ENCODE measurements at regions of chr6 and their contacts with region 1.

Region 1: DNA sequence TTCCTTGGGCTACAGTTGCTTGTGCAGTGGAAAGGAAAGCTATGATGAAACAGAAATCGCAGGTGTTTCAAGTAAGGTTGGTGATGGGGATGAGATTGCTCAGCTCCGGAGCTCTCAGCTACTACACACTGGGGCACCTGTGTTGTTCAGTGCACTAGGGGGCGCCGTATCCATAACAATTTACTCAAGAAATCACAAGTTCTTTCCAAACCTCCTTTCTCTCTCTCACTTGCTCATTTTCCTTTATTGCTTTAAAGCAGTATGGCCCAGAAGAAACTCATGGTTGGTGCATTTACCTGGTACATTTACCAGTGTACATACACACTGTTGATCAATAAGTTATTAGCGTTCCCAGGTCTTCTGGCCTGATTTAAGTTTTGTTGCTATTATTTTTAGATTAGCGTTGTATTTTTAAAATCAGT is 235.2 kb upstream of the TAB2 start:
- DNase-seq: peak; percentile 76 to 95 (median 86)
- ATAC-seq: peak; percentile 92
- H3K4me3 ChIP-seq: no peak overlapping the region
- H3K4me3 Mint-ChIP-seq: no peak overlapping the region
- H3K27ac ChIP-seq: no peak overlapping the region
- H3K27ac Mint-ChIP-seq: no peak overlapping the region
- H3K4me1 ChIP-seq: peaks cover 15% of the 10 kb centered on the region
- H3K4me1 Mint-ChIP-seq: peaks cover 39% of the 10 kb centered on the region
- H3K27me3 ChIP-seq: no peaks in the 10 kb centered on the region
- H3K27me3 Mint-ChIP-seq: no peaks in the 10 kb centered on the region
- CTCF ChIP-seq: peak; percentile 90

Region 2: GRCh38 chr6:149147938-149148718 is 65.8 kb after region 1 on chr6:
- CTCF ChIA-PET with region 1: no interaction called
- POLR2A ChIA-PET with region 1: no interaction called
- intact Hi-C with region 1: loop called in 1 of 2 experiments (anchors 5 kb)
- DNase-seq: peak in 5 of 14 experiments; percentile 15 to 83 (median 69)
- ATAC-seq: peak; percentile 90
- H3K4me3 ChIP-seq: no peak overlapping the region
- H3K4me3 Mint-ChIP-seq: peak overlapping the region; percentile 1
- H3K27ac ChIP-seq: peak overlapping the region; percentile 53 to 68
- H3K27ac Mint-ChIP-seq: peak overlapping the region; percentile 76
- H3K4me1 ChIP-seq: peaks cover 50% of the 10 kb centered on the region
- H3K4me1 Mint-ChIP-seq: peaks cover 55% of the 10 kb centered on the region
- H3K27me3 ChIP-seq: no peaks in the 10 kb centered on the region
- H3K27me3 Mint-ChIP-seq: no peaks in the 10 kb centered on the region
- CTCF ChIP-seq: no peak

Region 3: DNA sequence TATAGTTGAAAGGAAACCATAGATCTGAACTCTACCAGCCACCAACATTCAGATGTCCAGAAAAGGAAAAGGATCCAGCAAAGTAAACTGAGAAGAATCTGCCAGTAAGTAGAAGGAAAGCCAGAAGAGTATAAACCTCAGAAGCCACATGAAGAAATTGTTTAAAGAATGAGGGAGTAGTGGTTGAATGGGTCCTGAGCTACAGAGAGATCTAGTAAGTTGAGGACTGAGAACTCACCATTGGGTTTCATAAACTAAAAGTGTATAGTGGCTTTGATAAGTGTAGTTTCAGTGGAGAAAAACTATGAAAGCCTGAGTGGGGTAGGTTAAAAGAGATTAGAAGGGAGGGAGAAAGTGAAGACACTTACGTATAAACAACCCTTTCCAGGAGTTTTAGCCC is 285.8 kb after region 1 on chr6:
- CTCF ChIA-PET with region 1: no interaction called
- POLR2A ChIA-PET with region 1: interaction called, 4 read pairs
- intact Hi-C with region 1: loop called in 1 of 2 experiments (anchors 5 kb)
- DNase-seq: peak in 1 of 14 experiments; percentile 22
- ATAC-seq: no peak
- H3K4me3 ChIP-seq: no peak overlapping the region
- H3K4me3 Mint-ChIP-seq: no peak overlapping the region
- H3K27ac ChIP-seq: no peak overlapping the region
- H3K27ac Mint-ChIP-seq: no peak overlapping the region
- H3K4me1 ChIP-seq: peaks cover 24% of the 10 kb centered on the region
- H3K4me1 Mint-ChIP-seq: peaks cover 26% of the 10 kb centered on the region
- H3K27me3 ChIP-seq: no peaks in the 10 kb centered on the region
- H3K27me3 Mint-ChIP-seq: no peaks in the 10 kb centered on the region
- CTCF ChIP-seq: no peak

Measured in CD4-positive, alpha-beta T cell (primary cell).